ENCODE measurements at regions of chr17 and their contacts with region 1.

Region 1: GRCh38 chr17:28041068-28041843 is 1.2 kb upstream of the NLK start:
- DNase-seq: peak; percentile 100
- H3K4me3 ChIP-seq: peak overlapping the region; percentile 89 to 98 (median 97)
- H3K27ac ChIP-seq: peak overlapping the region; percentile 92 to 97 (median 94)
- H3K4me1 ChIP-seq: peaks cover 0 to 41% (median 27%) of the 10 kb centered on the region in 4 donors
- H3K27me3 ChIP-seq: no peaks in the 10 kb centered on the region
- CTCF ChIP-seq: no peak
- EP300 ChIP-seq: no peak
- POLR2A ChIP-seq: peak in 1 of 2 donors; percentile 44

Region 2: GRCh38 chr17:28097901-28098300 is 56.6 kb after region 1 on chr17:
- intact Hi-C with region 1: no loop called
- DNase-seq: no peak
- H3K4me3 ChIP-seq: no peak overlapping the region
- H3K27ac ChIP-seq: no peak overlapping the region
- H3K4me1 ChIP-seq: peaks cover 0 to 18% (median 3%) of the 10 kb centered on the region in 4 donors
- H3K27me3 ChIP-seq: no peaks in the 10 kb centered on the region
- CTCF ChIP-seq: no peak
- EP300 ChIP-seq: no peak
- POLR2A ChIP-seq: no peak

Region 3: DNA sequence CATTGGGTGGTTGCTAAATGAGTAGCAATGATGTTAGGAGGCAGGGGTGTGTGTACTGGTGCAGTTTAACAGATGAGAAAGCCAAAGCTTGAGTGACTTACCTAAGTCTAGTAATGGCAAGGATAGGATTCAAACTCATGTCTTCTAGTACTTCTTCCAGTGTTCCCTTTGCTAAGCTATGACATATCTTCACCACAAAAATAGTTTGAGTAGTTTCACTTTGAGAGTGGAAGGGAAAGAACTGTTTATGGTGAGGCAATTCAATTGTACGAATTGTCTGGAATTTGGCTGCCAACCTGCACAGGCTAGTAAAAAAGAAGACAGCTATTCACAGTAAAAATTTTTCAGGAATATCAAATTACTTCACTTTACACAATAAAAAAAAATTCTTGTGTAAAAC is 139.2 kb after region 1 on chr17:
- intact Hi-C with region 1: no loop called
- DNase-seq: no peak
- H3K4me3 ChIP-seq: no peak overlapping the region
- H3K27ac ChIP-seq: no peak overlapping the region
- H3K4me1 ChIP-seq: no peaks in the 10 kb centered on the region
- H3K27me3 ChIP-seq: no peaks in the 10 kb centered on the region
- CTCF ChIP-seq: no peak
- EP300 ChIP-seq: no peak
- POLR2A ChIP-seq: no peak

Region 4: DNA sequence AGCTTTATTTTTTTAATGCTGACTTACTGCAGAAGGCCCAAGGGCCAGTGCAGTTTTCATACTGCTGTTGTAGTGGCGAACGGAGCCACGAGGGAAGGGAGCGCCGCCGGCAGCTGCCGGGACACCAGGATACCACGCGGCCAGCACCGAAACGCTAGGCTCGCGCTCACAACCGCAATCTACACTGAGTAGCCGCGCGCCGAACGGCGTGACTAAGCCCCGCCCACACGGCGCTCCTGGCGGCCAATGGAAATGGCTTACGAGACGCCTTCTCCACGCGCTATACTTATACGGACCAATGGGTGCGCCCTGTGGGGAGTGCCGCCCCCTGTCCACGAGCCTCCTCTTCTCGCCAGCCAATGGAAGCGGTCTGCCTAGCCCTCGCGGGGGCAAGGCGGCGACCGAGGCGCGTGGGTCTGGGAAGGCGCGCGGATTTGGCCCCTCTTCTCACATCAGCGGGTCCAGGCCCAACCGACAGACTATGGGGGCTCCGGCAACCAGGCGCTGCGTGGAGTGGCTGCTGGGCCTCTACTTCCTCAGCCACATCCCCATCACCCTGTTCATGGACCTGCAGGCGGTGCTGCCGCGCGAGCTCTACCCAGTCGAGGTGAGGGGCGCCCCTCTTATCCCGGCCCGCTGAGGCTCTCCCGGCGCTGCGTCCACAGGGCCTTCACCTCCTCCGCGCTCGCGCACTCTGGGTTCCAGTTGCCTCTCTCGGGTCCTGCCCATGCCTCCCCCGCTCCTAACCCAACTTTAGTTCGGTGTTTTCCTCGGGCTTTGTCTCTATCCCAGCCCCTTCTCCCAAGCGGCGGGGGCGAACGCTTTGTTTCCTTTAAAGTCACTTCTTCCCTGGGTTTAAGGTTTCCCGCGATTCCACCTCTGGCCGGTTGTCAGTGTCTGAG is 277.8 kb after region 1 on chr17 and contains the start of gene TMEM97:
- intact Hi-C with region 1: loop called (anchors 5 kb)
- DNase-seq: peak; percentile 98
- H3K4me3 ChIP-seq: peak within 1 kb of the TSS; percentile 51 to 68 (median 58)
- H3K27ac ChIP-seq: peak within 1 kb of the TSS; percentile 64 to 79 (median 76)
- H3K4me1 ChIP-seq: peaks cover 0 to 22% (median 19%) of the 10 kb centered on the region in 4 donors
- H3K27me3 ChIP-seq: no peaks in the 10 kb centered on the region
- CTCF ChIP-seq: no peak
- EP300 ChIP-seq: no peak
- POLR2A ChIP-seq: no peak
- total RNA-seq, gene TMEM97: 5.8 to 10.9 (median 9.2) TPM